ENCODE measurements at regions of chr2 and their contacts with region 1.

Region 1: DNA sequence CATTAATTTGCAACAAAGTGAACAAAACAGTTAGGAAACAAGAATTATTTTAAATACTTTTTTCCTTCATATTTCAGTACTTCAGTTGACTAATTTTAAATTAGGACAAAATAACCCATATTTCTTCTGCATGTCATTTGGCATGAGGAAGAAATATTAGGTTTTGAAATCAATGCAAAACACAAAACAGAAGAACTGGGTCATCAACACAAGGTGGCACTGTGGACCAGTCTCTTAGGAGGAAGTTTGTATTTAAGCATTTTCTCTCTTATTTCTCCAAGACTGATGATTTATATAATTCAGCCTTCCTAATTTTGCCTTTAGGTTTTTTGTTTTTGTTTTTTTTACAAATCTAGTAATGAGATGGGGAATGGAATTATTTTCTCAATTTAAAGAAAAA is 352.8 kb upstream of the KCNH7 start:
- DNase-seq: peak; percentile 71
- H3K4me3 ChIP-seq: no peak overlapping the region
- H3K27ac ChIP-seq: no peak overlapping the region
- H3K4me1 ChIP-seq: no peaks in the 10 kb centered on the region
- H3K27me3 ChIP-seq: no peaks in the 10 kb centered on the region

Region 2: DNA sequence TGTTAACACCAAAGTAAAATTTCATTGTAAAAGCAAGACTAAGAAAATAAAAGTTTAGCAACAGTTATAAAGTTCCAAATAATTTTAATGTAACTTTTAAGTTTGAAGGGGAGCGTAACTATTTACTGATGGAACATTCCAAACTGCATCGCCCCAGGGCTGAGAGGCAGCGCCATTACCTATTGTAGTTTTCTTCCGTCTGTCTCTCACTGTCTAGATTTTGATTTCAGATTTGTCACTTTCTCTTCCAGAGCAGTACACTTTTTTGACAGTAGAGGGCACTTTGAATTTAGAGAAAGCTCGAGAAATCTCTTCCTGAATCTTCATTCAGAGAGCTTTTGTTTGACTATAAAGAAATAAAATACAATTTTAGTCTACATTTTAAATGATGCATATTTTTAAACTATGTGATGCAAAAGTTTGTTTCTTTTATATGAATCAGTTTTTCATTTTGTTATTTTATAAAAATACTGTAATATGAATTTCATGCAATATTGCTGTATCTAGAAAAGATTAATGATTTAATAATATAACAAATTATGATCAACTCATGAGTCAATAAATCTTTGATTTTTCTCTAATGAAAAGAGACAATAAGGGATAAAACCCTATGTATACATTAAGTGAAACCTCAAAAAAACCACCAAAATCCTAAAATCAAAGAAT is 154.7 kb after region 1 on chr2:
- in situ Hi-C with region 1: loop called (anchors 10 kb)
- DNase-seq: peak; percentile 69
- H3K4me3 ChIP-seq: peak overlapping the region; percentile 29; the same call in 1 of the 2 replicates
- H3K27ac ChIP-seq: no peak overlapping the region
- H3K4me1 ChIP-seq: peaks cover 3% of the 10 kb centered on the region; the same call in 1 of the 2 replicates
- H3K27me3 ChIP-seq: no peaks in the 10 kb centered on the region

Region 3: DNA sequence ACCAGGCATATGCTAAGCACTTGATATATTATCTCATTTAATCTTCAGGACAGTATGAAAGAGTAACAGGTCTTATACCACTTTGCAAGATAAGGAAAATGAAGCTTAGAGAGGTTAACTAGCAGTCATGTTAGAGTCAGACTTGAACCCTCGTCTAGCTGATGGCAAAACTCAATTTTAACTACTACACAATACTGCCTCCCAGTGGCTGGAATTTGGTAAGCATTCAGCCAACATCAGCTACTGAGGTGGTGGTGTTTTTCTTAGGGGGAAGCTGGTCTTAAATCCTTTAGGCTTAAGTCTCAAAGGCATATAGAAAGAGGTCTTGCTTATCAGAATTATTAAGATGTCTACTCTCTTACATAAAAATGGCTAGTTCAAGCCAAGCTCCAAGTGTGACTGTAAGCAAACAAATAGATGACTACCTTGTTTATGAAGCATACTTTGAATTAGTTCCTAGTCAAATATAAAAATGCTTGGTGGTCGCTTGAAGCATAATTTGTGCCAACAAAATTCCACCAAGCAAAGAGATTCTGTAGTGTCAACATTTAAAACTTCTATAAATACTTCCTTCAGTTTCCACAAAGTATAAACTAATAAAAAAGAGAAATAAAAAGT is 869.9 kb after region 1 on chr2:
- in situ Hi-C with region 1: loop called (anchors 25 kb)
- DNase-seq: peak; percentile 47
- H3K4me3 ChIP-seq: no peak overlapping the region
- H3K27ac ChIP-seq: no peak overlapping the region
- H3K4me1 ChIP-seq: no peaks in the 10 kb centered on the region
- H3K27me3 ChIP-seq: no peaks in the 10 kb centered on the region; the same call in 1 of the 2 replicates

Region 4: GRCh38 chr2:164495491-164496223 is 1304.3 kb after region 1 on chr2:
- in situ Hi-C with region 1: loop called (anchors 25 kb)
- DNase-seq: peak; percentile 78
- H3K4me3 ChIP-seq: no peak overlapping the region
- H3K27ac ChIP-seq: no peak overlapping the region
- H3K4me1 ChIP-seq: no peaks in the 10 kb centered on the region
- H3K27me3 ChIP-seq: no peaks in the 10 kb centered on the region